ENCODE measurements at regions of chr2 and their contacts with region 1.

Region 1: GRCh38 chr2:148674063-148675020 is 29.8 kb downstream of the EPC2 start:
- DNase-seq: peak; percentile 43
- H3K4me3 Mint-ChIP-seq: no peak overlapping the region
- H3K27ac Mint-ChIP-seq: peak overlapping the region; percentile 14
- H3K4me1 Mint-ChIP-seq: peaks cover 64% of the 10 kb centered on the region
- H3K27me3 Mint-ChIP-seq: no peaks in the 10 kb centered on the region

Region 2: GRCh38 chr2:148658807-148659722 is 15.3 kb before region 1 on chr2:
- CTCF ChIA-PET with region 1: interaction called, 14 read pairs
- POLR2A ChIA-PET with region 1: no interaction called
- intact Hi-C with region 1: loop called (anchors 2 kb)
- DNase-seq: no peak
- H3K4me3 Mint-ChIP-seq: peak overlapping the region; percentile 35
- H3K27ac Mint-ChIP-seq: peak overlapping the region; percentile 75
- H3K4me1 Mint-ChIP-seq: peaks cover 74% of the 10 kb centered on the region
- H3K27me3 Mint-ChIP-seq: no peaks in the 10 kb centered on the region

Region 3: DNA sequence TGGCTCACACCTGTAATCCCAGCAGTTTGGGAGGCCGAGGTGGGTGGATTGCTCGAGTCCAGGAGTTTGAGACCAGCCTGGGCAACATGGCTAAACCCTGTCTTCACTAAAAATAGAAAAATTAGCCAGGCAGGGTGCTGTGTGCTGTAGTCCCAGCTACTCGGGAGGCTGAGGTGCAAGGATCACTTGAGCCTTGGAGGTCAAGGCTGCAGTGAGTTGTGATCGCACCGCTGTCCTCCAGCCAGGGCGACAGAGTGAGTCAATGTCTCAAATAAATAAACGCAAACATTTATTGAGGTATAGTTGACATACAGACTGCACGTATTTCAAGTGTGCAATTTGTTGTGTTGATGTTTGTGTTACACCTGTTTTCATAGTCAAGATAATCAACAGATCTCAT is 10.1 kb before region 1 on chr2:
- CTCF ChIA-PET with region 1: interaction called, 14 read pairs
- POLR2A ChIA-PET with region 1: no interaction called
- intact Hi-C with region 1: no loop called
- DNase-seq: no peak
- H3K4me3 Mint-ChIP-seq: no peak overlapping the region
- H3K27ac Mint-ChIP-seq: no peak overlapping the region
- H3K4me1 Mint-ChIP-seq: peaks cover 67% of the 10 kb centered on the region
- H3K27me3 Mint-ChIP-seq: no peaks in the 10 kb centered on the region

Region 4: DNA sequence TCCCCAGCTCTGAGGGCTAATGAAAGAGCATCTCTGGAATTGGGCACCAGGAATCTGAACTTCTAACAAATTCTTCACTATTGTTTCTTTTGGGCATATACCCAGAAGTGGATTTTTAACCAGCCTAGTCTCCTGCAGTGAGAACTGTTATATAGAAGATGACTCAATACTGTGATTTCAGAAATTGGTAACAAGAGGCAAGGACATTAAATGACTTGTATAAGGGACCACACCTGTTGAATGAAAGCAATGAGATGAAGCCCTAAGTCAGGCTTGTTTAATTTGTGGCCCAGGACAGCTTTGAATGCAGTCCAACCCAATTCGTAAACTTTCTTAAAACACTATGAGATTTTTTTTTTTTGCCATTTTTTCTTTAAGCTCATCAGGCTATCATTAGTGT is 28.1 kb after region 1 on chr2:
- CTCF ChIA-PET with region 1: no interaction called
- POLR2A ChIA-PET with region 1: no interaction called
- intact Hi-C with region 1: no loop called
- DNase-seq: no peak
- H3K4me3 Mint-ChIP-seq: no peak overlapping the region
- H3K27ac Mint-ChIP-seq: peak overlapping the region; percentile 33
- H3K4me1 Mint-ChIP-seq: peaks cover 26% of the 10 kb centered on the region
- H3K27me3 Mint-ChIP-seq: no peaks in the 10 kb centered on the region

Measured in activated CD4-positive, alpha-beta memory T cell treated with anti-CD3 and anti-CD28 coated beads for 36 hours (primary cell).